Posterior cingulate gyrus (tissue), 11 donors: ENCODE measurements at regions of chr11 and their contacts with region 1.

Region 1: GRCh38 chr11:30314625-30315024 is 8.3 kb upstream of the ARL14EP start:
- DNase-seq: no peak

Region 2: DNA sequence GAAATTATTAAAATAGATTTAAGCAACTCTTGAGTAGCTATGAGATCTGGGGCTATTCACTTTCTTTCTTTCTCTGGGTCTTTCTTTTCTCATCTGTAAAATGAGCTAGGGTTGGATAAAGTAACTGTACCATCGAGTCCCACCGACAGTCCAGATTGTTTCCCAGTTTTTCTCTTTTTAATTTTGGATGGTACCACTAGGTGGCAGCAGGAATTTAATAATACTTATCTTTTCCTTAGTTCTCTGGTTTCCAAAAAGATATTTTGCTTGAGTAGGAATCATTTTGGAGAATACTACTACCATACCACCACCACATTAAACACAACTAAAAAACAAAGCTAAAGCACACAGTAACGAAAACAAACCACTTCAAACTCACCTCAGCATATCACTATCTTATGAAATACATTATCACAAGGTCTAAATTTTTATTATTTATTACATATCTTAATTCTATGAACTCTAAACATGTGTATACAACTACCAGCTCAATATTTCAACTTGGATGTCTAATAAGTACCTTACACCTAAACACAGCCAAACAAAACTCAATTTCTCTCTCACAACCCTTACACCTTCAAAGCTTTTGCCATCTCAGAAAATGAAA is 881.8 kb before region 1 on chr11:
- intact Hi-C with region 1: loop called (anchors 10 kb)
- DNase-seq: no peak

Region 3: GRCh38 chr11:30192620-30193019 is 122.0 kb before region 1 on chr11:
- intact Hi-C with region 1: no loop called
- DNase-seq: no peak